MCF 10A (cell line): ENCODE measurements at regions of chr14 and their contacts with region 1.

Region 1: DNA sequence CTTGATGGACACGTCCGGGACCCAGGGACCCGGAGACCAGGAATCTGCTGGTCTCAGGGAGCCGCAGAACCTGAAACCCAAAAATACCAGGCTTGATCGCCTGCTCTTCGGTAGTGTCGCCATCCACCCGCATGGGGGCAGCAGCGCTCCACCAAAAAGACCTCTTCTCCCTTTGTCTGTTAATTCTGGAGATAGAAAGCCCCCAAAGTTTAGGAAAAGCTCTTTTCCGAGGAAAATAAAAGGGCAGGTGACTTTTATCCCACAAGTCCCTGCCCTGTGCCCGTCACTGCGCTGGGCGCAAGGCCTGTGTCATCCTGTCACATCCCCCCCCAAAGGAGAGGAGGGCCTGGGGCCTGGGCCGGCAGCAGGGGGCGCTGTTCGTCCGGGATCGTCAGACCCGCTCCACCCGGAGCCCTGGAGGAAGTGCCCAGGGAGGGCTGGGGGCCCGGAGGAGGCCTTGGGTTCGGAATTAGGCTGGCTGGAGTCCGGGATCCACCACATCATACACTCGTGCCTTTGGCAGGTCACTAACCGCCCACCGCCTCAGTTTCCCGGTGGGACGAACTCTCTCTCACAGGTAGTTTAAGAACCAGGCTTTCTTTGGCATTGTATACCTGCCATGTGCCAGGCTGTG is 31.9 kb downstream of the DAD1 start:
- DNase-seq: peak; percentile 78
- H3K4me3 Mint-ChIP-seq: peak overlapping the region; percentile 62
- H3K27ac Mint-ChIP-seq: peak overlapping the region; percentile 46
- H3K4me1 Mint-ChIP-seq: peaks cover 22% of the 10 kb centered on the region
- H3K27me3 Mint-ChIP-seq: no peaks in the 10 kb centered on the region
- CTCF ChIP-seq: peak; percentile 98

Region 2: GRCh38 chr14:22464422-22465142 is 92.5 kb before region 1 on chr14:
- CTCF ChIA-PET with region 1: no interaction called
- POLR2A ChIA-PET with region 1: no interaction called
- intact Hi-C with region 1: no loop called
- DNase-seq: no peak
- H3K4me3 Mint-ChIP-seq: no peak overlapping the region
- H3K27ac Mint-ChIP-seq: no peak overlapping the region
- H3K4me1 Mint-ChIP-seq: peaks cover 4% of the 10 kb centered on the region
- H3K27me3 Mint-ChIP-seq: no peaks in the 10 kb centered on the region
- CTCF ChIP-seq: no peak

Region 3: GRCh38 chr14:22536853-22537338 is 20.2 kb before region 1 on chr14:
- CTCF ChIA-PET with region 1: interaction called, 48 read pairs
- POLR2A ChIA-PET with region 1: no interaction called
- intact Hi-C with region 1: no loop called
- DNase-seq: peak; percentile 98
- H3K4me3 Mint-ChIP-seq: no peak overlapping the region
- H3K27ac Mint-ChIP-seq: peak overlapping the region; percentile 91
- H3K4me1 Mint-ChIP-seq: peaks cover 25% of the 10 kb centered on the region
- H3K27me3 Mint-ChIP-seq: no peaks in the 10 kb centered on the region
- CTCF ChIP-seq: no peak

Region 4: GRCh38 chr14:22646570-22647254 is 89.6 kb after region 1 on chr14:
- CTCF ChIA-PET with region 1: interaction called, 36 read pairs
- POLR2A ChIA-PET with region 1: interaction called, 3 read pairs
- intact Hi-C with region 1: no loop called
- DNase-seq: peak; percentile 77
- H3K4me3 Mint-ChIP-seq: peak overlapping the region; percentile 34
- H3K27ac Mint-ChIP-seq: peak overlapping the region; percentile 94
- H3K4me1 Mint-ChIP-seq: peaks cover 40% of the 10 kb centered on the region
- H3K27me3 Mint-ChIP-seq: no peaks in the 10 kb centered on the region
- CTCF ChIP-seq: no peak

Region 5: GRCh38 chr14:22689186-22689585 is 132.1 kb after region 1 on chr14:
- CTCF ChIA-PET with region 1: no interaction called
- POLR2A ChIA-PET with region 1: no interaction called
- intact Hi-C with region 1: no loop called
- DNase-seq: peak; percentile 87
- H3K4me3 Mint-ChIP-seq: no peak overlapping the region
- H3K27ac Mint-ChIP-seq: no peak overlapping the region
- H3K4me1 Mint-ChIP-seq: no peaks in the 10 kb centered on the region
- H3K27me3 Mint-ChIP-seq: peaks cover 23% of the 10 kb centered on the region
- CTCF ChIP-seq: no peak

Region 6: DNA sequence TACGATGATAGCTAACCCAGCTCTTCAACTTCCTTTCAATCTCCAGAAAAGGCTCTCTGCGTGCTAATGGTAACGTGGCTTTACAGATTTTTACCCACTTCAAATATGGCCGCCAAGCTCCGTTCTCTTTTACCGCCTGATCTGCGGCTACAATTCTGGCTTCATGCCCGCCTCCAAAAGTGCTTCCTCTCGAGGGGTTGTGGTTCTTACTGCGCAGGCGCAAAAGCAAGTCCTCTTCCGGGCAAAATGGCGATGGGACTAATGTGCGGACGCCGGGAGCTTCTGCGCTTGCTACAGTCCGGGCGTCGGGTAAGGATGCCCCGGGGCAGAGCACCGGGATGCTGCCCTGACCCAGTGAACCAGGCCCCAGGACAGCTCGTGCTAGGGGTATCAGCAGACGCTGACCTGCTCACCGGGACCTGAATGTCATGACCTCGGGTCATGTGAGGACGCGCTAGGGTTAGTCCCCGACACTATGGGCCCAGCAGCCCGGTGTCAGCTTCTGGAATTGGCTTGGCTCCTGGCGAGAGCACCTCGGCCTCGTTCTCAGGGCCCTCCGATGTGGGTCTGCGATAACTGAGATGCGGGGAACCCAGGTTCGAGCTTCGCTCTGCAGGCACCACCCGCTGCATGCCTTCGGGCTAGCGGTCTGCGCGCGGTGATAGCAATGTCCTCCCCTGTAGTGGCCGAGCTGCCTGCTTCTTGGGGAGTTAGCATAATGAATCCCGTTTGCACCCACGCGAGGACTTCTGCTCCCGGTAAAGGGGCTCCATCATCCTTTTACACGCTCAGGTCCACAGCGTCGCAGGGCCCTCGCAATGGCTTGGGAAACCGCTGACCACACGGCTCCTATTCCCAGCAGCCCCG is 209.6 kb after region 1 on chr14 and contains the start of gene OXA1L:
- CTCF ChIA-PET with region 1: interaction called, 19 read pairs
- POLR2A ChIA-PET with region 1: interaction called, 12 read pairs
- intact Hi-C with region 1: loop called (anchors 5 kb)
- DNase-seq: peak; percentile 99
- H3K4me3 Mint-ChIP-seq: peak within 1 kb of the TSS; percentile 91
- H3K27ac Mint-ChIP-seq: peak within 1 kb of the TSS; percentile 99
- H3K4me1 Mint-ChIP-seq: peaks cover 21% of the 10 kb centered on the region
- H3K27me3 Mint-ChIP-seq: no peaks in the 10 kb centered on the region
- CTCF ChIP-seq: no peak
- total RNA-seq, gene OXA1L: 100 and 103 TPM in 2 replicates

Region 7: GRCh38 chr14:22865424-22866405 is 308.6 kb after region 1 on chr14:
- CTCF ChIA-PET with region 1: interaction called, 11 read pairs
- POLR2A ChIA-PET with region 1: interaction called, 5 read pairs
- intact Hi-C with region 1: no loop called
- DNase-seq: no peak
- H3K4me3 Mint-ChIP-seq: no peak overlapping the region
- H3K27ac Mint-ChIP-seq: no peak overlapping the region
- H3K4me1 Mint-ChIP-seq: peaks cover under 1% of the 10 kb centered on the region
- H3K27me3 Mint-ChIP-seq: no peaks in the 10 kb centered on the region
- CTCF ChIP-seq: no peak

Region 8: DNA sequence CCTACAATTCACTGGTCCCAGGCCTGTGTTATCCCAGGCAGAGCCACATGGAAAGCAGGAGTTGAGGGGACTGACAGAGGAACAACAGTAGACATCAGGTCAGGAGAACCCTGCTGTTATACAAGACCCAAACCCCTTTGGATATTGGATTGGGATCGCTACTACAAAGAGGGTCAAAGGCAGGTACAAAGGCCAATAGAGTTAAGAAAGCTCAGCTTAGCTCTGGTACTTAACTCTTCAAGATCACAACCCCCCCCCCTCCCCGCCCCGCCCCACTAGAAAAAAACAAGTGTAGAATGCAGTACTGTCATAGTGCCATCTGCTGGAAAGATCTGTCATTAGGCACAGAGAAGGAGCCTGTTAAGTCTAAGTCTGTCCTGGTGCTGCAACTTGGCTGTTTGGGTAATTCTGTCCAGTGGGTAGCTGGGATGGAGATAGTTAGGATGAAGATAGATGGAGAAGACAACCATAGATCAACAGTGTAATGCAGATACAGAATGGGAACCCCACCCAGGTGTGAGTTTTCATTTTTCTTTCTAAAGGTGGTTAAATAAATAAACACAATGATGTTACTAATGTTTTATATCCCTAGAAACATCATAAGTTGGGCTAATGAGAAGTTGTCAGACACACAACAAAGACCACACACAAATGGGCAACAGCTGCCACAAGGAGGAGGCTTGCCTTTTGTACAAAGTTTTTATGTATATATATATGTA is 343.1 kb after region 1 on chr14:
- CTCF ChIA-PET with region 1: interaction called, 35 read pairs
- POLR2A ChIA-PET with region 1: no interaction called
- intact Hi-C with region 1: loop called (anchors 1 kb)
- DNase-seq: peak; percentile 74
- H3K4me3 Mint-ChIP-seq: no peak overlapping the region
- H3K27ac Mint-ChIP-seq: no peak overlapping the region
- H3K4me1 Mint-ChIP-seq: peaks cover 17% of the 10 kb centered on the region
- H3K27me3 Mint-ChIP-seq: no peaks in the 10 kb centered on the region
- CTCF ChIP-seq: peak; percentile 59